ENCODE measurements at regions of chr16 and their contacts with region 1.

Region 1: GRCh38 chr16:88737298-88738150 is 31.2 kb downstream of the CTU2 start:
- DNase-seq: peak; percentile 96
- H3K4me3 ChIP-seq: peak overlapping the region in 1 of 8 donors; percentile 17
- H3K27ac ChIP-seq: peak overlapping the region in 5 of 8 donors; percentile 76 to 86 (median 81)
- H3K4me1 ChIP-seq: peaks cover 6 to 46% (median 30%) of the 10 kb centered on the region in 6 donors
- H3K27me3 ChIP-seq: no peaks in the 10 kb centered on the region
- CTCF ChIP-seq: peak; percentile 96 to 100 (median 99)
- POLR2A ChIP-seq: no peak

Region 2: DNA sequence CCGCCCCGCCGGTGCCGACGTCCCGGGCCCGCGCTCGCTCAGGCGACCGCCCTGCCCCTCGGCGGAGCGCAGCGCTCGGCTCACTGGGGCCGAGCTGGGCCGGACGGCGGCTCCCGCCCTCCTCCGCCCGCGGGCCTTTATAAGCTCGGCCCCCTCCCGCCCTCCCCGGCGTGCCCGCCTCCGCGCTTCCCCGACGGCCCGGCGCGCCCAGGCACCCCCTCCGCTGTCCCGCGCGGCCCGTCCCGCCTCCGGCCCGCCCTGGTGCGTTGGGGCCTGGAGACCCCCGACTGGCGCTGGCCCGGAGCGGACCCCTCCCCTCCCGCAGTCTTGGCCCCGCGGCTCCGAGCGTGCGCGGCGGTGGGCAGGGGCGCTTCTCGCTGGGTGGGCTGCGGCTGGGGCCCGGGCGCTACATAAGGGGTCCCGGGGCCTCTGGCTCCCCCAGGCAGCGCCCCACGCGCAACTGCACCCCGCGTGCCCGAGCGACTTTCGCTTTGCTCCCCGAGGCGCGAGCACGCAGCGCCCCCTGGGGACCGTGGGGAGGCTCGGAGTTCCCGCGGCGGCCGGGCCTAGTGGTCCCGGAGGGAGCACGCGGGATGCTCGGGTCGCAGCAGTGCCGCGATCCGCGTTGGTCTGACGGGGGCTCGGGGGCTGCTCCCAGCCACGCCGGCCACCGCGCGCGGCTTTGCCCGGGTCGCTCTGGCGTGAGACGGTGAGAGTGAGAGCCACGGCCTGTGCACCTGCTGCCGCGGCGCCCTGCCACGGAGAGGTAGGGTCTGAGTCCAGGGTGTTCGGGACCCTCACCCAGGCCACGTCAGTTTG is 47.8 kb after region 1 on chr16 and contains the start of gene PIEZO1:
- intact Hi-C with region 1: loop called (anchors 2 kb)
- DNase-seq: peak; percentile 97
- H3K4me3 ChIP-seq: peak within 1 kb of the TSS; percentile 70 to 88 (median 81)
- H3K27ac ChIP-seq: peak within 1 kb of the TSS; percentile 74 to 97 (median 92)
- H3K4me1 ChIP-seq: peaks cover 42 to 63% (median 58%) of the 10 kb centered on the region in 6 donors
- H3K27me3 ChIP-seq: no peaks in the 10 kb centered on the region
- CTCF ChIP-seq: peak; percentile 79 to 97 (median 95)
- POLR2A ChIP-seq: peak in 1 of 3 donors; percentile 82
- total RNA-seq, gene PIEZO1: 154 to 249 (median 199) TPM

Region 3: GRCh38 chr16:88856828-88857733 is 119.6 kb after region 1 on chr16 and contains the starts of genes GALNS and TRAPPC2L:
- intact Hi-C with region 1: no loop called
- DNase-seq: peak; percentile 99
- H3K4me3 ChIP-seq: peak within 1 kb of the TSS; percentile 90 to 100 (median 97)
- H3K27ac ChIP-seq: peak within 1 kb of the TSS; percentile 69 to 94 (median 88)
- H3K4me1 ChIP-seq: peaks cover 32 to 80% (median 67%) of the 10 kb centered on the region in 6 donors
- H3K27me3 ChIP-seq: no peaks in the 10 kb centered on the region
- CTCF ChIP-seq: peak in 1 of 11 experiments; percentile 21
- POLR2A ChIP-seq: peak in 1 of 3 donors; percentile 68
- total RNA-seq, gene GALNS: 37.6 to 71.6 (median 53.4) TPM
- total RNA-seq, gene TRAPPC2L: 28.9 to 44.1 (median 38.6) TPM

Region 4: GRCh38 chr16:89167425-89167941 is 430.0 kb after region 1 on chr16:
- intact Hi-C with region 1: loop called (anchors 5 kb)
- DNase-seq: peak; percentile 97
- H3K4me3 ChIP-seq: peak overlapping the region in 6 of 8 donors; percentile 14 to 53 (median 30)
- H3K27ac ChIP-seq: peak overlapping the region in 5 of 8 donors; percentile 58 to 66 (median 60)
- H3K4me1 ChIP-seq: peaks cover 15 to 75% (median 41%) of the 10 kb centered on the region in 6 donors
- H3K27me3 ChIP-seq: peaks cover 0 to 71% (median 14%) of the 10 kb centered on the region in 7 donors
- CTCF ChIP-seq: peak; percentile 87 to 98 (median 95)
- POLR2A ChIP-seq: no peak

Region 5: DNA sequence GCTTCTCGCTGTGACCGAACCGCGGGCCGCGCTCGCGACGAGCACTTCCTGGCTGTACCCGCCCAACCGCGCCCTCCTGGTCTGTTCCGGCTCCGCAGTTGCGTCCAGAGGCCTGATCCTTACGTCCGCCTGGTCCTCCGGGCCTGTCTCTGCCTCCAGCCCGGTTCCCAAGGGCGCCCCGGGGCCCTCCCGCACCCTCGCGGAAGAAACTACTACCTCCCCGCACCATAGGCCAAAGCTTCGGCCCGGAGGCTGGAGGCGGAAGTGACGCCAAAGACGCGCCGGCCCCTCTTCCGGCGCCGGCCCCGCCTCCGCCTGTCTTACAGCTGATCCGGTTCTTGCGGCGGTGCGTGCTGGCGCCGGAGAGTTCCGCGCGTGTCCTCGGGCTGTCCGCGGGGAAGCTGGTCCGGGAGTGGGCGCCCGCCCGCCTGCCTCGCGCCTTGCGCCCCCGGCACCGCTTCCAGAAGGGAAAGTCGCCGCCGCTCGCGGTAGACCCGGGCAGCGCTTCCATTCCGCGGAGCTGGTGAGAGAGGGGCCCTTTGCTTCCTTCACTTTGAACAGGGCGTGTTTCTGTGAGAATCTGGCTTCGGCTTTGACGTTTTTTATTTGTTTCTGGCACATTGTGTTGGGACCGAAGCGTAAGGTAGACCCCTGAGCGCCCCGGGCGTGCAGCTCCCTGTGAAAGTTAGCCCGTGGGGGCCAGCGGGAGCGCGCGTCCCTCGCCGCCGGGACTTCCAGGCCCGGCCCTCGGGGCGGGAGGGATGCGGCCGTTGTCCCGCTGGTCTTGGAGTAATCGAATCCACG is 480.1 kb after region 1 on chr16 and contains the start of gene ZNF778:
- intact Hi-C with region 1: loop called (anchors 10 kb)
- DNase-seq: peak; percentile 96
- H3K4me3 ChIP-seq: peak within 1 kb of the TSS; percentile 86 to 100 (median 98)
- H3K27ac ChIP-seq: peak within 1 kb of the TSS; percentile 95 to 99 (median 96)
- H3K4me1 ChIP-seq: peaks cover 19 to 62% (median 33%) of the 10 kb centered on the region in 6 donors
- H3K27me3 ChIP-seq: no peaks in the 10 kb centered on the region
- CTCF ChIP-seq: peak in 4 of 11 experiments; percentile 5 to 40 (median 16)
- POLR2A ChIP-seq: peak in 2 of 3 donors; percentile 3 to 48
- total RNA-seq, gene ZNF778: 9.4 to 34.4 (median 12.9) TPM